ENCODE measurements at regions of chr3 and their contacts with region 1.

Region 1: GRCh38 chr3:132006605-132007204 is 28.1 kb downstream of the CPNE4 start:
- DNase-seq: peak; percentile 55
- H3K4me3 ChIP-seq: no peak overlapping the region
- H3K27ac ChIP-seq: no peak overlapping the region
- H3K4me1 ChIP-seq: no peaks in the 10 kb centered on the region
- H3K27me3 ChIP-seq: no peaks in the 10 kb centered on the region
- CTCF ChIP-seq: peak; percentile 71 to 72

Region 2: GRCh38 chr3:131026321-131027178 is 980.2 kb before region 1 on chr3 and contains the starts of genes ASTE1 and NEK11:
- CTCF ChIA-PET with region 1: no interaction called
- dilution Hi-C with region 1: no loop called
- in situ Hi-C with region 1: loop called in 1 of 2 experiments (anchors 25 kb)
- intact Hi-C with region 1: no loop called
- DNase-seq: peak; percentile 87
- H3K4me3 ChIP-seq: peak within 1 kb of the TSS; percentile 68 to 81 (median 78)
- H3K27ac ChIP-seq: peak within 1 kb of the TSS; percentile 97
- H3K4me1 ChIP-seq: peaks cover 4% of the 10 kb centered on the region
- H3K27me3 ChIP-seq: no peaks in the 10 kb centered on the region
- CTCF ChIP-seq: peak in 1 of 2 donors; percentile 4
- total RNA-seq, gene ASTE1: 4.4 to 6.3 TPM
- total RNA-seq, gene NEK11: 7.7 to 20.2 TPM

Region 3: GRCh38 chr3:131794766-131795388 is 211.8 kb before region 1 on chr3:
- CTCF ChIA-PET with region 1: no interaction called
- dilution Hi-C with region 1: no loop called
- in situ Hi-C with region 1: loop called in 1 of 2 experiments (anchors 25 kb)
- intact Hi-C with region 1: no loop called
- DNase-seq: peak; percentile 29
- H3K4me3 ChIP-seq: no peak overlapping the region
- H3K27ac ChIP-seq: no peak overlapping the region
- H3K4me1 ChIP-seq: no peaks in the 10 kb centered on the region
- H3K27me3 ChIP-seq: no peaks in the 10 kb centered on the region
- CTCF ChIP-seq: peak; percentile 89 to 95

Region 4: DNA sequence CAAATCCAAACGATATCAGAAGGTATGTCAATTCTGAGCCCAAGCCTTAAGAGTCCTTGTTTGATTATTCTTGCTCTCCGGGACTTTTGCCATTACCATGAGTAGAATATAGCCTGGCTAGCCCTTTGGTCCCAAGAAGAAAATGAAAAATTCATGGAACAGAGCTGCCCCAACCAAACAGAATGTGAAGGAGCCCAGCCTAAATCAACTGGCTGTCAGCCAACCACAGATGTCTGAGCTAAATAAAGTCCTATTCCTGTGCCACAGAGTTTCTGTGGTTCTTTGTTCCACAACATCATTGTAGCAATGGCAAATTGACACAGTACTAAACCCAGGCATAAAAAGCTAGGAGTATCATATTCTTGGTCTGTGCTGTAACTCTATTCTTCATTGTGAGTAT is 157.1 kb before region 1 on chr3:
- CTCF ChIA-PET with region 1: no interaction called
- dilution Hi-C with region 1: no loop called
- in situ Hi-C with region 1: no loop called
- intact Hi-C with region 1: no loop called
- DNase-seq: no peak
- H3K4me3 ChIP-seq: no peak overlapping the region
- H3K27ac ChIP-seq: no peak overlapping the region
- H3K4me1 ChIP-seq: no peaks in the 10 kb centered on the region
- H3K27me3 ChIP-seq: no peaks in the 10 kb centered on the region
- CTCF ChIP-seq: no peak

Region 5: DNA sequence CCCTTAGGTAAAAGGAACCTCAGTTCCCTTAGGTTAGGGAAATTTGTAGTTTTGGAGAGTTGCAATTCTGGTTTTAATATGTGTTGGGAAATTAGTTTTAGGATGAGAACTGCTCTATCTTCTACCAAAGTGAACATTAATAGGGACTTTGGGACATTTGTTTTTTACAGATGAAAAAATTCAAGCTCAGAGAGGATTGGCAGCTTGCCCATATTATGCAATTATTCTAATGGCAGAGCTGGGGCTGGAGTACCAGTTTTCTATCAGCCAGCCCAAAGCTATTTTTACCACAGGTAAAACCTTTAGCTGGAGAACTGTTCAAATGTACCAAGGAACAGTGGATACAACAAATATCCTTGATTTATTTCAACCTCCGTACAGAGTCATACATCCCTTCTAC is 98.9 kb before region 1 on chr3:
- CTCF ChIA-PET with region 1: no interaction called
- dilution Hi-C with region 1: loop called (anchors 5 kb)
- in situ Hi-C with region 1: no loop called
- intact Hi-C with region 1: no loop called
- DNase-seq: no peak
- H3K4me3 ChIP-seq: no peak overlapping the region
- H3K27ac ChIP-seq: no peak overlapping the region
- H3K4me1 ChIP-seq: peaks cover 9% of the 10 kb centered on the region
- H3K27me3 ChIP-seq: no peaks in the 10 kb centered on the region
- CTCF ChIP-seq: no peak

Measured in mammary epithelial cell (primary cell).